Activated T-helper 2 cell treated with anti-CD3 and anti-CD28 coated beads, Interferon-gamma antibody, Interleukin-2, Interleukin-4, amounts not matched to agents 10 μg/mL and 5 μg/mL and 100 μg/mL, durations not matched to agents 14 hours and 24 hours and 36 hours (primary cell): ENCODE measurements at regions of chrX and their contacts with region 1.

Region 1: GRCh38 chrX:7059214-7059838 is 88.2 kb upstream of the STS start:
- DNase-seq: no peak
- H3K4me3 Mint-ChIP-seq: peak overlapping the region; percentile 5
- H3K27ac Mint-ChIP-seq: peak overlapping the region; percentile 70
- H3K4me1 Mint-ChIP-seq: peaks cover 21% of the 10 kb centered on the region
- H3K27me3 Mint-ChIP-seq: no peaks in the 10 kb centered on the region

Region 2: GRCh38 chrX:7083468-7084396 is 24.4 kb after region 1 on chrX:
- intact Hi-C with region 1: loop called (anchors 1 kb)
- DNase-seq: peak; percentile 66
- H3K4me3 Mint-ChIP-seq: peak overlapping the region; percentile 21
- H3K27ac Mint-ChIP-seq: peak overlapping the region; percentile 4
- H3K4me1 Mint-ChIP-seq: peaks cover 42% of the 10 kb centered on the region
- H3K27me3 Mint-ChIP-seq: no peaks in the 10 kb centered on the region

Region 3: GRCh38 chrX:7286168-7286837 is 227.0 kb after region 1 on chrX:
- intact Hi-C with region 1: no loop called
- DNase-seq: no peak
- H3K4me3 Mint-ChIP-seq: no peak overlapping the region
- H3K27ac Mint-ChIP-seq: no peak overlapping the region
- H3K4me1 Mint-ChIP-seq: no peaks in the 10 kb centered on the region
- H3K27me3 Mint-ChIP-seq: no peaks in the 10 kb centered on the region